ENCODE measurements at regions of chr12 and their contacts with region 1.

Region 1: GRCh38 chr12:31659087-31659933 is at the start of gene ETFBKMT:
- DNase-seq: peak; percentile 96
- ATAC-seq: peak; percentile 97
- H3K4me3 ChIP-seq: peak within 1 kb of the TSS; percentile 63 to 94 (median 86)
- H3K4me3 Mint-ChIP-seq: peak within 1 kb of the TSS; percentile 93
- H3K27ac ChIP-seq: peak within 1 kb of the TSS; percentile 93 to 97
- H3K27ac Mint-ChIP-seq: peak within 1 kb of the TSS; percentile 95
- H3K4me1 ChIP-seq: peaks cover 25 to 31% of the 10 kb centered on the region in 2 donors
- H3K4me1 Mint-ChIP-seq: peaks cover 29% of the 10 kb centered on the region
- H3K27me3 ChIP-seq: no peaks in the 10 kb centered on the region
- H3K27me3 Mint-ChIP-seq: no peaks in the 10 kb centered on the region
- CTCF ChIP-seq: peak; percentile 31
- total RNA-seq, gene ETFBKMT: 1.4 and 2.4 TPM in 2 replicates

Region 2: DNA sequence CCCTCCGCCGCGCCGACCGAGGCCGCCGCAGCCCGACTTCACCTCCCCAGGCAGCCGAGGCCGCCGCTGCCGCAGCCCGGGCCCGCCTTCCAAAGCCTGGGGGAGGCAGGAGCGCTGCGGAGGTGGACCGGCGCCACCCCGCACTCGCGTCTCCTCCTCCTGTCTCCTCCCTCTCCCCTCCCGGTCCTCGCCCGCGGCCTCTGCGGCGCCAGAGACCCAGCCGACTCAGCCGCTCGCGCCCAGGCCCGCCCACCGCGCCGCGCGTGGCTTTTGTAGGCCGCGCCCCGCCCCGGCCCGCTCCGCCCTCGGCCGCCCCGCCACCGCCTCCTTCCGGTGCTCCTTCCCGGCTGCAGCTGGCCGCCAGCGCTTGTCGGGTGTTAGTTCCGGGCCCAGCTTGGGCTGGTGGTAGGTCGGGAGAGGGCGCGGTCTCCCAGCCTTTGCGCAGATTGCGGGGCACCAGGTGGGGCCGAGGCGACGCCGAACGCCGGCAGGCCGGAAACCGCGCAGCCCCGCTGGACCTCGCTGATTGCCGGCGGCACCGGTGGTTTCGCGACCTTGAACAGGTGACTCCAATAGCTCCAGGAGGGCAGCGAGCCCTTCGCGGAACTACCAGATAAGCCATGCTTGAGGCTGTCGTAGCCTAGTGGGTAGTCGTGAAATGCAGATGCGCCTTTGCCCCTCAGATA is 904.5 kb before region 1 on chr12 and contains the start of gene CAPRIN2:
- CTCF ChIA-PET with region 1: no interaction called
- POLR2A ChIA-PET with region 1: no interaction called
- intact Hi-C with region 1: loop called (anchors 10 kb)
- DNase-seq: peak; percentile 95
- ATAC-seq: peak; percentile 88
- H3K4me3 ChIP-seq: peak within 1 kb of the TSS; percentile 49 to 72 (median 71)
- H3K4me3 Mint-ChIP-seq: peak within 1 kb of the TSS; percentile 99
- H3K27ac ChIP-seq: peak within 1 kb of the TSS; percentile 52 to 79
- H3K27ac Mint-ChIP-seq: peak within 1 kb of the TSS; percentile 89
- H3K4me1 ChIP-seq: peaks cover 14 to 15% of the 10 kb centered on the region in 2 donors
- H3K4me1 Mint-ChIP-seq: peaks cover 23% of the 10 kb centered on the region
- H3K27me3 ChIP-seq: no peaks in the 10 kb centered on the region
- H3K27me3 Mint-ChIP-seq: no peaks in the 10 kb centered on the region
- CTCF ChIP-seq: peak; percentile 29
- total RNA-seq, gene CAPRIN2: 55.2 and 57.8 TPM in 2 replicates

Region 3: GRCh38 chr12:31578632-31579031 is 80.7 kb before region 1 on chr12:
- CTCF ChIA-PET with region 1: no interaction called
- POLR2A ChIA-PET with region 1: no interaction called
- intact Hi-C with region 1: no loop called
- DNase-seq: no peak
- ATAC-seq: no peak
- H3K4me3 ChIP-seq: no peak overlapping the region
- H3K4me3 Mint-ChIP-seq: no peak overlapping the region
- H3K27ac ChIP-seq: peak overlapping the region in 1 of 2 donors; percentile 55
- H3K27ac Mint-ChIP-seq: peak overlapping the region; percentile 46
- H3K4me1 ChIP-seq: peaks cover 34 to 35% of the 10 kb centered on the region in 2 donors
- H3K4me1 Mint-ChIP-seq: peaks cover 59% of the 10 kb centered on the region
- H3K27me3 ChIP-seq: no peaks in the 10 kb centered on the region
- H3K27me3 Mint-ChIP-seq: no peaks in the 10 kb centered on the region
- CTCF ChIP-seq: no peak

Region 4: GRCh38 chr12:31603546-31604009 is 55.7 kb before region 1 on chr12:
- CTCF ChIA-PET with region 1: interaction called, 4 read pairs
- POLR2A ChIA-PET with region 1: no interaction called
- intact Hi-C with region 1: loop called (anchors 1 kb)
- DNase-seq: peak; percentile 87
- ATAC-seq: peak; percentile 84
- H3K4me3 ChIP-seq: peak overlapping the region in 3 of 5 experiments; percentile 5 to 54 (median 9)
- H3K4me3 Mint-ChIP-seq: peak overlapping the region; percentile 47
- H3K27ac ChIP-seq: peak overlapping the region; percentile 61 to 67
- H3K27ac Mint-ChIP-seq: peak overlapping the region; percentile 81
- H3K4me1 ChIP-seq: peaks cover 46 to 56% of the 10 kb centered on the region in 2 donors
- H3K4me1 Mint-ChIP-seq: peaks cover 52% of the 10 kb centered on the region
- H3K27me3 ChIP-seq: no peaks in the 10 kb centered on the region
- H3K27me3 Mint-ChIP-seq: no peaks in the 10 kb centered on the region
- CTCF ChIP-seq: no peak

Region 5: DNA sequence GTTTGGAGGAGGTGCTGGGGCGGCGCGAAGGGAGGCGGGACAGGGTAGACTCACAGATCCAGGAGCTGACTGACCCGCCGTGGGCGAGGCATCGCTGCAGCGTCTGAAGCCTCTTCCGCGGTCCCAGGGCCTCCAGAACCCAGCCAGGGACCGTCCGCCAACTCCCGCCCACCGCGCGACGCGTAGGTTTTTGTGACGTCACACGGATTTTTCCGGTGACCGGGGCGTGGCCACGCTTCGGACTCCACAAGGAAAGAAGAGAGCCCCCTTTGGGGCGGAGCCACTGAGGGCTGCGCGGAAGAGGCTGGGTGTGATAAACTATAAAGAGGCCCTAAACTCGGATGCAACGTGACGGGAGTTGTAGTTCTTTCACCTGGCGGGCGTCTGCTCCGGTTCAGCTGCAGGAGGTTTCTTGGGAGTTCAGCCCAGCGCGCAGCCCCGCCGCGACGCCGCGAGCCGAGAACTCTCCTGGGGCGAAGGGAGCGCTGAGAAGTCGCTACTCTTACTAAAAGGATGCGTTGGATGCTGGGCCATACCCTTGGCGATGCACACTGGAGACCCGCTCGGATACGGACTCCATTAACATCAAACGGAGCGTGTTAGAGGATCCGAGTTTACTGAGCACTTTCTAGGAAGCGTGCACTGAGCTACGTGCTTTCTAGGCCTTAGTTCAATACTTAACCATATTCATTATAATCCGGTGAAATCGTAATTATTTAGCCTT is 69.8 kb after region 1 on chr12 and contains the start of gene AMN1:
- CTCF ChIA-PET with region 1: interaction called, 3 read pairs
- POLR2A ChIA-PET with region 1: no interaction called
- intact Hi-C with region 1: loop called (anchors 1 kb)
- DNase-seq: peak; percentile 100
- ATAC-seq: peak; percentile 87
- H3K4me3 ChIP-seq: peak within 1 kb of the TSS; percentile 74 to 99 (median 85)
- H3K4me3 Mint-ChIP-seq: peak within 1 kb of the TSS; percentile 98
- H3K27ac ChIP-seq: peak within 1 kb of the TSS; percentile 94 to 96
- H3K27ac Mint-ChIP-seq: peak within 1 kb of the TSS; percentile 98
- H3K4me1 ChIP-seq: peaks cover 38 to 41% of the 10 kb centered on the region in 2 donors
- H3K4me1 Mint-ChIP-seq: peaks cover 73% of the 10 kb centered on the region
- H3K27me3 ChIP-seq: no peaks in the 10 kb centered on the region
- H3K27me3 Mint-ChIP-seq: no peaks in the 10 kb centered on the region
- CTCF ChIP-seq: no peak
- total RNA-seq, gene AMN1: 30.4 and 32.6 TPM in 2 replicates

Region 6: DNA sequence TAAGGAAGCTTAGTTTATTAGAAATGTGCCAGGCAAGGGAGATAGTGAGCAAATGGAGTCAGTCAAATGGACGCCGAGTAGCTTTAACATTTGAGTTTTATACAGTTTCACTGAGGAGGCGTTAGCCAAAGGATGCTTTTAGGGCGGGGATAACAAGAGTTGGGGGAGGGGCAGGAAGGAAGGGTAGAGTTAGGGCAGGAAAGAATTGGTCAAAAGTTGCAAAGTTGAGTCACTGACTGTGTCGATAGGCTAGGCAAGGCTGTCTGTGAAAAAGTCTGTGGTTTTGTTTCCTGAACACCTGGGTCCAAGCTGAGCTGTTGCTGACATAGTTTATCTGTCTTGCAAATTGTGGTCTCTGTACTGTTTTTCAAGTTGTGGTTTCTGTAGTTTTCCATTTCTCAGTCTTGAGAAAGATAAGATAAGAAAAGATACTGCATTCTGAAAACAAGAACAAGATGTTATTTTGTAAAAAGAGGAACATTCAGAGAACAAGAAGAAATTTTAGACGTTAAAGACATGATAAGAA is 237.3 kb after region 1 on chr12:
- CTCF ChIA-PET with region 1: interaction called, 7 read pairs
- POLR2A ChIA-PET with region 1: interaction called, 4 read pairs
- intact Hi-C with region 1: loop called (anchors 1 kb)
- DNase-seq: peak; percentile 96
- ATAC-seq: peak; percentile 91
- H3K4me3 ChIP-seq: peak overlapping the region in 2 of 5 experiments; percentile 11 to 60
- H3K4me3 Mint-ChIP-seq: peak overlapping the region; percentile 72
- H3K27ac ChIP-seq: peak overlapping the region; percentile 89 to 96
- H3K27ac Mint-ChIP-seq: peak overlapping the region; percentile 91
- H3K4me1 ChIP-seq: peaks cover 42 to 55% of the 10 kb centered on the region in 2 donors
- H3K4me1 Mint-ChIP-seq: peaks cover 52% of the 10 kb centered on the region
- H3K27me3 ChIP-seq: no peaks in the 10 kb centered on the region
- H3K27me3 Mint-ChIP-seq: no peaks in the 10 kb centered on the region
- CTCF ChIP-seq: no peak

Region 7: DNA sequence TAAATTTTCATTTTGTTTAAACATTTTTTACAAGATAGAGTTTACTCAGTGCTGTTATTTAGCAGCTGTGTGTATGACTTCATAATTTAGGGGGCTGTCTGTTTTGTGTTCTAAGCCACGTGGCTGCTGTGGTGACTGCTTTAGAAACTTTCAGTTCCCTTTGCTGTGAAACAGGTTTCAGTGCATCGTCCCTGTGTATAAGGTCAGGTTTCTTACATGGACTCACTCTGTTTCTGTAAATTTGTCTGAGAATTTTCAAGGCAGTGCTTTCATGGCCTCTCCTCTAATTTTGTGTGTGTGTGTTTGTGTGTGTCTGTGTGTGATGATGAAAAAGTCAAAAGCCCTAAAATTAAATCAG is 479.7 kb after region 1 on chr12:
- CTCF ChIA-PET with region 1: no interaction called
- POLR2A ChIA-PET with region 1: interaction called, 3 read pairs
- intact Hi-C with region 1: loop called (anchors 5 kb)
- DNase-seq: peak; percentile 89
- ATAC-seq: peak; percentile 84
- H3K4me3 ChIP-seq: peak overlapping the region; percentile 32 to 72 (median 55)
- H3K4me3 Mint-ChIP-seq: peak overlapping the region; percentile 95
- H3K27ac ChIP-seq: peak overlapping the region; percentile 95 to 97
- H3K27ac Mint-ChIP-seq: peak overlapping the region; percentile 99
- H3K4me1 ChIP-seq: peaks cover 31 to 39% of the 10 kb centered on the region in 2 donors
- H3K4me1 Mint-ChIP-seq: peaks cover 57% of the 10 kb centered on the region
- H3K27me3 ChIP-seq: no peaks in the 10 kb centered on the region
- H3K27me3 Mint-ChIP-seq: no peaks in the 10 kb centered on the region
- CTCF ChIP-seq: no peak